Breast epithelium (tissue), 4 donors: ENCODE measurements at regions of chr4 and their contacts with region 1.

Region 1: DNA sequence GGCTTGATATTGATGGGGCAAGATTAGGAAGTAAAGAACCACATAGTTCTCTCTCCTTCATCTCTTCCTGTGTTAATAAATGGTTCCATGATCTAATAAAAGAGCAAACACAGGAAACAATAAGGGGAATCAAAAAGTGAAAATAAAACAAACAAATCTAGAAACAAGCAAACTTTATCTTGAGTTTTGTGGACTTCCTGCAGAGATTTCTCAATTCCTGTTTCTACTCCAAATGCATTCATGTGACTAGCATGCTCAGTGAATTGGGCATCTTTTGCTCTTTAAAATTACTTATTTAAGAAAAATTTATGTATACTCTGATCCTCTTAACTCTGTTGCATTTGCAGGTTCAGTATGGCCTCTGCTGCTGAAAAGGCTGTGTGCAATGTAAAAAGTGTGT is 682.0 kb downstream of the KCTD8 start:
- DNase-seq: no peak
- H3K4me3 ChIP-seq: no peak overlapping the region
- H3K27ac ChIP-seq: no peak overlapping the region
- H3K4me1 ChIP-seq: no peaks in the 10 kb centered on the region
- H3K27me3 ChIP-seq: no peaks in the 10 kb centered on the region
- CTCF ChIP-seq: no peak
- POLR2A ChIP-seq: no peak

Region 2: GRCh38 chr4:44493924-44494323 is 727.3 kb after region 1 on chr4:
- intact Hi-C with region 1: loop called (anchors 5 kb)
- DNase-seq: no peak
- H3K4me3 ChIP-seq: no peak overlapping the region
- H3K27ac ChIP-seq: no peak overlapping the region
- H3K4me1 ChIP-seq: no peaks in the 10 kb centered on the region
- H3K27me3 ChIP-seq: no peaks in the 10 kb centered on the region
- CTCF ChIP-seq: no peak
- POLR2A ChIP-seq: no peak